OCI-LY7 (cell line): ENCODE measurements at regions of chr22 and their contacts with region 1.

Region 1: DNA sequence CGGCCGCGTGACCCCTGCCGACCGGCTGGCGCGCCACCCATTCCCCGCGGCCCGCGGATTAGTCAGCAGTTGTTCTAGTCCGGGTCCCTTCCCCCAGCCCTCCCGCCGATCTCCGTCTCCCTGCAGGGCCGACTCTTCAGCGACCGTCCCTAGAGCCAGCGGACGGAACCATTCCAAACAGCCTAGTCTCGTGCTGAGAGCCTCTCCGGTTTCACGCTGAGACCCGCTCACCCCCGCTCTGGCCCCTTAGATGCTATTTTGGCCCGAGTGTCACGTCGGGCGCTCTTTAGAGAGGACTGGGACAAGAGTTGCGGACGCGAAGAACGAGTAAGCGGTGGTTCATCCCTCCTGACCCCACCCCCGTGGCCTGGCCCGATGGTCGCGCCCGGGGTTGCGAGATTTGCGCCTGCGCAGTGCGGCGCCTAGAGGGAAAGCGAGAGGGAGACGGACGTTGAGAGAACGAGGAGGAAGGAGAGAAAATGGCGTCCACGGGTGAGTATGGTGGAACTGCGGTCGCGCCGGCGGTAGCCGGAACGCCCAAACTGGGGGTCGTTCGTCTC is at the starts of genes EWSR1 and RHBDD3:
- DNase-seq: peak; percentile 97
- H3K4me3 ChIP-seq: peak within 1 kb of the TSS; percentile 92
- H3K27ac ChIP-seq: peak within 1 kb of the TSS; percentile 75
- H3K4me1 ChIP-seq: peaks cover 34% of the 10 kb centered on the region
- CTCF ChIP-seq: no peak
- total RNA-seq, gene EWSR1: 270 and 311 TPM in 2 replicates
- total RNA-seq, gene RHBDD3: 37.9 and 44.5 TPM in 2 replicates

Region 2: DNA sequence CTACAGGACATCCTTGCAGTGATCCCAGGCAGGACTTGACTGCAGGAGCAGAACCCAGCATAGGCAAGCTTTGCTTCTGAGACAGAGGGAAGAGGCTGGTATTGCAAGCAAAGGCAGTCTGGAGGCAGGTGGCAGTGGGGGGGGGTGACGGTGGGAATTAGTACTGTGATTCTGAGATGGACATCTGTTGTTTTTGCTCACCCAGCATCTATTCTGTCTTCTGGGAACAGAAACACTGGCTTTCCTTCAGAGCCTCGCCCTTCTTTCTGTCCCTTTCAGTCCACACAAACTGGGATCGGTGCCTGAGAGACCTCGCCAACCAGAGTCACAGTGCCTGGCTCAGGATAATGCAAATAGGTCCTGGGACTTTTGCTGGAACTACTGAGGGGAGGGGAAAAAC is 78.7 kb after region 1 on chr22:
- CTCF ChIA-PET with region 1: no interaction called
- POLR2A ChIA-PET with region 1: no interaction called
- intact Hi-C with region 1: loop called (anchors 5 kb)
- DNase-seq: no peak
- H3K4me3 ChIP-seq: peak overlapping the region; percentile 32
- H3K27ac ChIP-seq: peak overlapping the region; percentile 96
- H3K4me1 ChIP-seq: peaks cover 42% of the 10 kb centered on the region
- CTCF ChIP-seq: no peak